PC-9 (cell line): ENCODE measurements at regions of chr10 and their contacts with region 1.

Region 1: GRCh38 chr10:119933179-119933578 is 40.6 kb downstream of the SEC23IP start:
- DNase-seq: no peak
- H3K4me3 ChIP-seq: no peak overlapping the region
- H3K27ac ChIP-seq: no peak overlapping the region
- H3K4me1 ChIP-seq: no peaks in the 10 kb centered on the region
- H3K27me3 ChIP-seq: no peaks in the 10 kb centered on the region
- CTCF ChIP-seq: 0 out of 2 replicates have a peak, but pooled peaks have one; percentile 27

Region 2: GRCh38 chr10:119693262-119693957 is 239.8 kb before region 1 on chr10:
- CTCF ChIA-PET with region 1: no interaction called
- POLR2A ChIA-PET with region 1: no interaction called
- intact Hi-C with region 1: no loop called
- DNase-seq: no peak
- H3K4me3 ChIP-seq: no peak overlapping the region
- H3K27ac ChIP-seq: no peak overlapping the region
- H3K4me1 ChIP-seq: peaks cover 5% of the 10 kb centered on the region
- H3K27me3 ChIP-seq: no peaks in the 10 kb centered on the region
- CTCF ChIP-seq: no peak

Region 3: DNA sequence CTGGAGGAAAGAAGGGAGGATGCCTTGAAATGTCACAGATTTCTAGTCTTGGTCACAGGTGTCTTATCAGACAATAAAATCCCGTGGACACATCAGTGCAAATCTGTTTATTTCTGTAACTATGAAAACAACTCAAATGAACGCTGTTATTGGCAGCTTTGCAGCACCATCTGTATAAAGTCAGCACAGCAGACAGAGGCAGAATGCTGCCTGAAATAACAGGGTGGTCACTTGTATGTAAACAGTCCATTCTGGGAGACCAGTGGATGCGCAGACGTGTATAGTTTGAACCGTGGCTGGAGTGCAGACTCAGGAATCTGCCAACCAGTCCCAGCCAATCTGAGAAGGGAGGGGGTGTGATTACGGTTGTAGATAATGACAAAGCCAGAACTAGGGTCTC is 14.1 kb after region 1 on chr10:
- CTCF ChIA-PET with region 1: interaction called, 10 read pairs
- POLR2A ChIA-PET with region 1: no interaction called
- intact Hi-C with region 1: no loop called
- DNase-seq: no peak
- H3K4me3 ChIP-seq: no peak overlapping the region
- H3K27ac ChIP-seq: no peak overlapping the region
- H3K4me1 ChIP-seq: no peaks in the 10 kb centered on the region
- H3K27me3 ChIP-seq: no peaks in the 10 kb centered on the region
- CTCF ChIP-seq: no peak

Region 4: GRCh38 chr10:120048391-120048790 is 115.2 kb after region 1 on chr10:
- CTCF ChIA-PET with region 1: no interaction called
- POLR2A ChIA-PET with region 1: no interaction called
- intact Hi-C with region 1: no loop called
- DNase-seq: no peak
- H3K4me3 ChIP-seq: no peak overlapping the region
- H3K27ac ChIP-seq: no peak overlapping the region
- H3K4me1 ChIP-seq: no peaks in the 10 kb centered on the region
- H3K27me3 ChIP-seq: no peaks in the 10 kb centered on the region
- CTCF ChIP-seq: no peak

Region 5: DNA sequence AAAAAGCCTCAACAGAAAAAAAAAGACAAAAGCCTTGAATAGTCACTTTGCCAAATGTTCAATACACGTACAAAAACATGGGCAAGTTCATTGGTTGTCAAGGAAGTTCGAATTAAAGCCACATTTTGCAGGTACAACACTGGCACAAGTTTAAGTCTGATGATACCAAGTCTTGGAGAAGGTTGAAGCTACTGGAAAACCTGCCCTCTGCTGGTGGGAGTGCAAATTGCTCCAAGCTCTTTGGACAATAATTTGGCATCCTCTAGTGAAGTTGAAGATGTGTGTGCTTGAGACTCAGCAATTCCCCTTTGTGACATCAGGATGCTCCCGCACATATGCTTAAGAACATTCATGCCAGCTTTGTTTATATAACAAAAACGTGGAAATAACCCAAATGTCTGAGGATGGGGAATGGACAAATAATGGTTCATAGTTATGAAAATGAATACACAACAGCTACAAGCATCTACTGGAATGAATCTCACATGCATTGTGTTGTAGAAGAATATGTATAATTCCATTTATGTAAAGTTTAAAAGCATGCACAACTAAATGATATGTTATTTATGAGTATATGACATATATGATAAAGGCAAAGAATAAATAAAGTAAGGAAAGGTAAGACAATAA is 403.8 kb after region 1 on chr10:
- CTCF ChIA-PET with region 1: no interaction called
- POLR2A ChIA-PET with region 1: no interaction called
- intact Hi-C with region 1: loop called (anchors 5 kb)
- DNase-seq: peak in 1 of 2 experiments; percentile 24
- H3K4me3 ChIP-seq: no peak overlapping the region
- H3K27ac ChIP-seq: no peak overlapping the region
- H3K4me1 ChIP-seq: no peaks in the 10 kb centered on the region
- H3K27me3 ChIP-seq: 0 out of 2 replicates have a peak, but pooled peaks cover 5% of the 10 kb centered on the region
- CTCF ChIP-seq: peak; percentile 69